ENCODE measurements at regions of chr5 and their contacts with region 1.

Region 1: DNA sequence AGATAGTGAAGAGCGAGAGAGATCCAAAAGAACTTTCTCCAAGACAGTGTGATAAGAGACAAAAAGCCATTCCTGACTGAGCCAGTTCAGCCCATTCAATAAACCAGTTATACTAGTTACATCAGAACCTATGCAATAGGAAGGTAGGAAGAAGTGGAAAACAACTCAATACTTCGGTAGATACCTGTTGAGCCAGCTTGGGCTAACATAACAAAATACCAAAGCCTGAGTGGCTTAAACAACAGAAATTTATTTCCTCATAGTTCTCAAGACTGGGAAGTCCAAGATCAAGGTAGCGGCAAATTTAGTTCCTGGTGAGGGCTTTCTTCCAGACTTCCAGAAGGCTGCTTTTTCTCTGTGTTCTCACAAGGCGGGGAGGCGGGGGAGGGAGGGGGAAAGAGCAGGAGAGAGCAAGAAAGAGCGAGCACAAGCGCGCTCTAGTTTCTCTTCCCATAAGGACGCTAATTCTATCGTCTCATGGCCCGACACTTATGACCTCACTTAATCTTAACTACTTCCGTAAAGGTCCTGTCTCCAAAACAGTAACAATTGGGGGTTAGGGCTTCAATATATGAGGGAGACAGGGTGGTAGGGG is 214.4 kb upstream of the GRAMD2B start:
- DNase-seq: no peak

Region 2: GRCh38 chr5:125499636-125500332 is 709.0 kb before region 1 on chr5:
- intact Hi-C with region 1: loop called in 1 of 2 experiments (anchors 10 kb)
- DNase-seq: no peak

Measured in posterior vena cava (tissue), 2 donors.